A673 (cell line): ENCODE measurements at regions of chr1 and their contacts with region 1.

Region 1: GRCh38 chr1:49630156-49630555 is 393.6 kb downstream of the AGBL4 start:
- DNase-seq: peak; percentile 15
- H3K4me3 ChIP-seq: no peak overlapping the region
- H3K27ac ChIP-seq: no peak overlapping the region
- H3K4me1 ChIP-seq: no peaks in the 10 kb centered on the region
- H3K27me3 ChIP-seq: no peaks in the 10 kb centered on the region
- CTCF ChIP-seq: peak; percentile 45

Region 2: GRCh38 chr1:48661726-48662463 is 968.3 kb before region 1 on chr1:
- CTCF ChIA-PET with region 1: no interaction called
- POLR2A ChIA-PET with region 1: no interaction called
- intact Hi-C with region 1: loop called (anchors 5 kb)
- DNase-seq: no peak
- H3K4me3 ChIP-seq: no peak overlapping the region
- H3K27ac ChIP-seq: no peak overlapping the region
- H3K4me1 ChIP-seq: no peaks in the 10 kb centered on the region
- H3K27me3 ChIP-seq: no peaks in the 10 kb centered on the region
- CTCF ChIP-seq: no peak